B cell (primary cell): ENCODE measurements at regions of chr19 and their contacts with region 1.

Region 1: DNA sequence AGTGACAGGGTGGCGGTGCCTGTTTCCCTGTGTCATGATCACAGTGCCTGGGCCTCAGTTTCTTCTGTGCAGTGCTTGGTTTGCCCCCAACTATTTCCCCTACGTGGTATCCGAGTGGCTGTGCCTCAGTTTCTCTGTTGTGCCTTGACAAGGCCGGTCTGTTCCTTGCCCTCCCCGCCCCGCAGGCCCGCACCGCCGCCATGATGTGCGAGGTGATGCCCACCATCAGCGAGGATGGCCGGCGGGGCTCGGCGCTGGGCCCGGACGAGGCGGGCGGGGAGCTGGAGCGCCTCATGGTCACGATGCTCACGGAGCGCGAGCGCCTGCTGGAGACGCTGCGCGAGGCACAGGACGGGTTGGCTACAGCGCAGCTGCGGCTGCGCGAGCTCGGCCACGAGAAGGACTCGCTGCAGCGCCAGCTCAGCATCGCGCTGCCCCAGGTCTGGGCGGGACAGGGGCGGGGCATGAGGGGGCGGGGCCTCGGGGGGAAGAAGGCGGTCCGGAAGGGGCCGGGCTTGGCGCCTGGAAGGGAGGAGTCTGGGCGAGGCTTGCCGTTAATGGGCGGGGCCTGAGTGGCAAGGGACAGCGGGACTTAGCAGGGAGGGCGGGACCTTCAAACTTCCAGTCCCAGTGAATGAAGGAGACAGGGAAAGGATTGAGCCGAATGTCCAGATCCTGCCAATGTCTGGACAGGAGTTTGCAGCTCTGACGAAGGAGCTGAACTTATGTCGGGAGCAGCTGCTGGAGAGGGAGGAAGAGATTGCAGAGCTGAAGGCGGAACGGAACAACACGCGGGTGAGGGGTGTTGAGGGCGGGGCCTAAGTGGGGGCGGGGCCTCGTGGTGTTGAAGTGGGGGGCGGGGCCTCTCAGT is 8.6 kb downstream of the PPFIA3 start:
- DNase-seq: peak; percentile 97
- ATAC-seq: peak; percentile 96
- H3K4me3 ChIP-seq: peak overlapping the region; percentile 34 to 71 (median 50)
- H3K4me3 Mint-ChIP-seq: peak overlapping the region; percentile 85
- H3K27ac ChIP-seq: no peak overlapping the region
- H3K27ac Mint-ChIP-seq: peak overlapping the region; percentile 34
- H3K4me1 ChIP-seq: peaks cover 9 to 13% of the 10 kb centered on the region in 2 donors
- H3K4me1 Mint-ChIP-seq: peaks cover 15% of the 10 kb centered on the region
- H3K27me3 ChIP-seq: peaks cover 0 to 2% (median 0%) of the 10 kb centered on the region in 4 experiments
- H3K27me3 Mint-ChIP-seq: no peaks in the 10 kb centered on the region
- CTCF ChIP-seq: no peak

Region 2: GRCh38 chr19:48918801-48919247 is 209.1 kb before region 1 on chr19:
- CTCF ChIA-PET with region 1: no interaction called
- POLR2A ChIA-PET with region 1: no interaction called
- intact Hi-C with region 1: no loop called
- DNase-seq: no peak
- ATAC-seq: no peak
- H3K4me3 ChIP-seq: no peak overlapping the region
- H3K4me3 Mint-ChIP-seq: no peak overlapping the region
- H3K27ac ChIP-seq: no peak overlapping the region
- H3K27ac Mint-ChIP-seq: no peak overlapping the region
- H3K4me1 ChIP-seq: peaks cover 5 to 6% of the 10 kb centered on the region in 2 donors
- H3K4me1 Mint-ChIP-seq: peaks cover 11% of the 10 kb centered on the region
- H3K27me3 ChIP-seq: no peaks in the 10 kb centered on the region
- H3K27me3 Mint-ChIP-seq: no peaks in the 10 kb centered on the region
- CTCF ChIP-seq: no peak

Region 3: DNA sequence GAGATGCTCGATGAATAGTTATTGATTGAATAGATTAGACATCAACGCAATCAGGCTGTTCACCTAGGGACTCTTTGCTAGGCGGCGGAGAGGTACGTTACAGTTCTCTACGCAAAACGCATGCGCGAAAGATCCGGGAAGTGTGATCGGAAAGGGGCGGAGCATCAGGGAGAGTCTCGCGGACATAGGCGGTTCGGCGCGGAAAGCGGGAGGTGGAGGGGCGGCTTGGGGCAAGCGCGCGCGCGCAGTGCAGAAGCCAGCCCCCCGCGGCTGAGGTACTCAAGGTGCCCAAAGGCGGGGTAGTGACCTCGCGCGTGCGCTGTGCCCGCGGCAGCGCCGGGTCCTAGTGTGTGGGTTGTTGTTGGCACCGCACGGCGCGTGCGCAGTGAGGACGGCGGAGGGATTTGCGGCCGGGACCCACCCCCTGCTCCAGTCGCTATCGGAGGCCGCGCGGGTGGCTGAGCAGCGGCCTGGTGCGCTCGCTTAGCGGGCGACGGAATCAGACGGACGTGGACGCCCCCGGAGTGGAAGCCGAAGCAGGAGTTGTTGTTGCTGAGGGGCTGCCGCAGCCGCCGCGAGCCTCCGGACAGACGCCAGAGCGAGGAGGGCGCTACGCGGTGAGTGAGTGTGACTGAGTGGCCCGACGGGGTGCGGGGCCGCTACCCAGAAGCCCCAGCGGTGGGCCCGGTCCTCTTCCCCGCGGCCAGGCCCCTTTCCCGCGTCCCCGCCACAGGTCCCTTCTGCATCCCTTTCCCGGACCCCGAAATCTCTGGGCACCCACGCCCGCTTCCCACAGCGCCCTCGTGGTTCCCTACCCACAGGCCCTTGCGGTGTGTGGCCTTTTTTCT is 42.7 kb before region 1 on chr19 and contains the start of gene SNRNP70:
- CTCF ChIA-PET with region 1: no interaction called
- POLR2A ChIA-PET with region 1: no interaction called
- intact Hi-C with region 1: loop called (anchors 1 kb)
- DNase-seq: peak; percentile 100
- ATAC-seq: peak; percentile 95
- H3K4me3 ChIP-seq: peak within 1 kb of the TSS; percentile 74 to 89 (median 82)
- H3K4me3 Mint-ChIP-seq: peak within 1 kb of the TSS; percentile 93
- H3K27ac ChIP-seq: peak within 1 kb of the TSS; percentile 66 to 90
- H3K27ac Mint-ChIP-seq: peak within 1 kb of the TSS; percentile 87
- H3K4me1 ChIP-seq: peaks cover 20 to 28% of the 10 kb centered on the region in 2 donors
- H3K4me1 Mint-ChIP-seq: peaks cover 33% of the 10 kb centered on the region
- H3K27me3 ChIP-seq: peaks cover 0 to 3% (median 0%) of the 10 kb centered on the region in 4 experiments
- H3K27me3 Mint-ChIP-seq: peaks cover 5% of the 10 kb centered on the region
- CTCF ChIP-seq: no peak
- total RNA-seq, gene SNRNP70: 598 and 610 TPM in 2 replicates

Region 4: GRCh38 chr19:49148784-49149651 is 21.1 kb after region 1 on chr19:
- CTCF ChIA-PET with region 1: no interaction called
- POLR2A ChIA-PET with region 1: interaction called, 7 read pairs
- intact Hi-C with region 1: loop called (anchors 2 kb)
- DNase-seq: peak; percentile 82
- ATAC-seq: peak; percentile 53
- H3K4me3 ChIP-seq: peak overlapping the region in 4 of 5 experiments; percentile 57 to 76 (median 61)
- H3K4me3 Mint-ChIP-seq: peak overlapping the region; percentile 89
- H3K27ac ChIP-seq: no peak overlapping the region
- H3K27ac Mint-ChIP-seq: no peak overlapping the region
- H3K4me1 ChIP-seq: peaks cover 44 to 48% of the 10 kb centered on the region in 2 donors
- H3K4me1 Mint-ChIP-seq: peaks cover 42% of the 10 kb centered on the region
- H3K27me3 ChIP-seq: peaks cover 0 to 81% (median 38%) of the 10 kb centered on the region in 4 experiments
- H3K27me3 Mint-ChIP-seq: peaks cover 57% of the 10 kb centered on the region
- CTCF ChIP-seq: no peak

Region 5: GRCh38 chr19:49533551-49534488 is 405.9 kb after region 1 on chr19:
- CTCF ChIA-PET with region 1: no interaction called
- POLR2A ChIA-PET with region 1: no interaction called
- intact Hi-C with region 1: no loop called
- DNase-seq: peak; percentile 93
- ATAC-seq: peak; percentile 85
- H3K4me3 ChIP-seq: peak overlapping the region; percentile 16 to 76 (median 61)
- H3K4me3 Mint-ChIP-seq: peak overlapping the region; percentile 86
- H3K27ac ChIP-seq: no peak overlapping the region
- H3K27ac Mint-ChIP-seq: peak overlapping the region; percentile 27
- H3K4me1 ChIP-seq: peaks cover 32 to 47% of the 10 kb centered on the region in 2 donors
- H3K4me1 Mint-ChIP-seq: peaks cover 40% of the 10 kb centered on the region
- H3K27me3 ChIP-seq: peaks cover 0 to 6% (median 1%) of the 10 kb centered on the region in 4 experiments
- H3K27me3 Mint-ChIP-seq: no peaks in the 10 kb centered on the region
- CTCF ChIP-seq: peak; percentile 64

Region 6: DNA sequence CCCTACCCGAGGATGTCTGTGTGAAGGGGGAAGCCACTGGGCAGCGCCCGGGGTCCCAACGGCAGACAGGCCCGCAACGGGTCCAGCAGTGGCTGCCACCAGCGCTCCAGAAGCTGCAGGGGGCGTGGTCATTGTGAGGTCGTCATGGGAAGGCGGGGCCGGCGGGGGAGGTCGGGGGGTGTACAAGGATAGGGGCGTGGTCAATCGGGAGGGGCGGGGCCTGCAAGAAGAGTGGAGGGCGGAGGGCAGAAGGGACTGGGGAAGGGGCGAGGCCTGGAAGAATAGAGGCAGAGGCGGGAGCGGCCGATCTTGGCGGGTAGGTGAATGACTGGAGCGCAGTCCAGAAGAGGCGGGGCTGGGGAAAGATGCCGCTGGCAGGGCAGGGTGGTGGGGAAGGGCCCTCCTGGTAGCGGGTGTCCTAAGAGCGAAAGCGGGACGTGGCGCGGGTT is 680.8 kb after region 1 on chr19:
- CTCF ChIA-PET with region 1: no interaction called
- POLR2A ChIA-PET with region 1: no interaction called
- intact Hi-C with region 1: loop called (anchors 5 kb)
- DNase-seq: peak; percentile 92
- ATAC-seq: peak; percentile 56
- H3K4me3 ChIP-seq: peak overlapping the region; percentile 28 to 87 (median 79)
- H3K4me3 Mint-ChIP-seq: peak overlapping the region; percentile 96
- H3K27ac ChIP-seq: peak overlapping the region; percentile 63 to 66
- H3K27ac Mint-ChIP-seq: peak overlapping the region; percentile 92
- H3K4me1 ChIP-seq: peaks cover 30 to 46% of the 10 kb centered on the region in 2 donors
- H3K4me1 Mint-ChIP-seq: peaks cover 49% of the 10 kb centered on the region
- H3K27me3 ChIP-seq: no peaks in the 10 kb centered on the region
- H3K27me3 Mint-ChIP-seq: no peaks in the 10 kb centered on the region
- CTCF ChIP-seq: no peak